Activated CD8-positive, alpha-beta T cell treated with anti-CD3 and anti-CD28 coated beads for 36 hours (primary cell): ENCODE measurements at regions of chr15 and their contacts with region 1.

Region 1: DNA sequence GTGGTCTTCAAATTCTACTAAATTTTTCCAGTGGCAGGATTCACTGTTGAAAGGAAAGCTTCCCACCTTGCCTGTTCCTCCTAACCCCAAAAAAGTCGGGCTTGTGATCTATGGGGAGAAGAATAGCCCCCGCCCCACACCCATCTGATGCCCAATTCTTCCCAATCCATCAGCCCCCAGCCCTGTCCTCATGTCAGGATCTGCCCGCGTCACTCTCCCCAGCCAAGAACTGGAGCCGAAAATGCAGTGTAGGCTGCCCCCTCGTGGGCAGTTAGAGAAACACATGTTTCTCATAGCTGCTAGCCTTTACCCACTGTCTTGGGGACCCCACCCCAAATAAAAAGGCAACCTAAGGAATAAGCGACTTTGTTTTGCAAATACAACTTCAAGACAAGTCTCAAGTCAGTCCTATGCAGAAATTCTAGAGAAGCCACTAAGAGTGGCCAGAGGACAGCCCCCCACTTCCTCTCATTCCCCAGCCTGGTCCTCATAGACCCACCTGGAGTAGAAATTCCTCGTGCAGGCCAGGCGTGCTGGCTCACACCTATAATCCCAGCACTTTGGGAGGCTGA is 13.0 kb upstream of the CSK start:
- DNase-seq: peak; percentile 74
- ATAC-seq: peak; percentile 59
- H3K4me3 Mint-ChIP-seq: peak overlapping the region; percentile 19
- H3K27ac Mint-ChIP-seq: peak overlapping the region; percentile 44
- H3K4me1 Mint-ChIP-seq: peaks cover 24% of the 10 kb centered on the region
- H3K27me3 Mint-ChIP-seq: peaks cover 2% of the 10 kb centered on the region
- CTCF ChIP-seq: peak; percentile 85

Region 2: GRCh38 chr15:74411691-74412558 is 356.9 kb before region 1 on chr15:
- CTCF ChIA-PET with region 1: no interaction called
- POLR2A ChIA-PET with region 1: no interaction called
- intact Hi-C with region 1: no loop called
- DNase-seq: no peak
- ATAC-seq: no peak
- H3K4me3 Mint-ChIP-seq: no peak overlapping the region
- H3K27ac Mint-ChIP-seq: no peak overlapping the region
- H3K4me1 Mint-ChIP-seq: peaks cover 24% of the 10 kb centered on the region
- H3K27me3 Mint-ChIP-seq: no peaks in the 10 kb centered on the region
- CTCF ChIP-seq: no peak

Region 3: GRCh38 chr15:74525946-74526345 is 242.9 kb before region 1 on chr15:
- CTCF ChIA-PET with region 1: no interaction called
- POLR2A ChIA-PET with region 1: no interaction called
- intact Hi-C with region 1: no loop called
- DNase-seq: no peak
- ATAC-seq: no peak
- H3K4me3 Mint-ChIP-seq: no peak overlapping the region
- H3K27ac Mint-ChIP-seq: no peak overlapping the region
- H3K4me1 Mint-ChIP-seq: peaks cover 5% of the 10 kb centered on the region
- H3K27me3 Mint-ChIP-seq: no peaks in the 10 kb centered on the region
- CTCF ChIP-seq: no peak

Region 4: GRCh38 chr15:74620636-74621545 is 148.0 kb before region 1 on chr15:
- CTCF ChIA-PET with region 1: interaction called, 79 read pairs
- POLR2A ChIA-PET with region 1: interaction called, 6 read pairs
- intact Hi-C with region 1: no loop called
- DNase-seq: peak; percentile 89
- ATAC-seq: peak; percentile 96
- H3K4me3 Mint-ChIP-seq: no peak overlapping the region
- H3K27ac Mint-ChIP-seq: peak overlapping the region; percentile 77
- H3K4me1 Mint-ChIP-seq: peaks cover 60% of the 10 kb centered on the region
- H3K27me3 Mint-ChIP-seq: no peaks in the 10 kb centered on the region
- CTCF ChIP-seq: peak; percentile 98

Region 5: GRCh38 chr15:74669627-74670026 is 99.2 kb before region 1 on chr15:
- CTCF ChIA-PET with region 1: interaction called, 11 read pairs
- POLR2A ChIA-PET with region 1: no interaction called
- intact Hi-C with region 1: no loop called
- DNase-seq: no peak
- ATAC-seq: no peak
- H3K4me3 Mint-ChIP-seq: no peak overlapping the region
- H3K27ac Mint-ChIP-seq: no peak overlapping the region
- H3K4me1 Mint-ChIP-seq: peaks cover 6% of the 10 kb centered on the region
- H3K27me3 Mint-ChIP-seq: no peaks in the 10 kb centered on the region
- CTCF ChIP-seq: no peak

Region 6: DNA sequence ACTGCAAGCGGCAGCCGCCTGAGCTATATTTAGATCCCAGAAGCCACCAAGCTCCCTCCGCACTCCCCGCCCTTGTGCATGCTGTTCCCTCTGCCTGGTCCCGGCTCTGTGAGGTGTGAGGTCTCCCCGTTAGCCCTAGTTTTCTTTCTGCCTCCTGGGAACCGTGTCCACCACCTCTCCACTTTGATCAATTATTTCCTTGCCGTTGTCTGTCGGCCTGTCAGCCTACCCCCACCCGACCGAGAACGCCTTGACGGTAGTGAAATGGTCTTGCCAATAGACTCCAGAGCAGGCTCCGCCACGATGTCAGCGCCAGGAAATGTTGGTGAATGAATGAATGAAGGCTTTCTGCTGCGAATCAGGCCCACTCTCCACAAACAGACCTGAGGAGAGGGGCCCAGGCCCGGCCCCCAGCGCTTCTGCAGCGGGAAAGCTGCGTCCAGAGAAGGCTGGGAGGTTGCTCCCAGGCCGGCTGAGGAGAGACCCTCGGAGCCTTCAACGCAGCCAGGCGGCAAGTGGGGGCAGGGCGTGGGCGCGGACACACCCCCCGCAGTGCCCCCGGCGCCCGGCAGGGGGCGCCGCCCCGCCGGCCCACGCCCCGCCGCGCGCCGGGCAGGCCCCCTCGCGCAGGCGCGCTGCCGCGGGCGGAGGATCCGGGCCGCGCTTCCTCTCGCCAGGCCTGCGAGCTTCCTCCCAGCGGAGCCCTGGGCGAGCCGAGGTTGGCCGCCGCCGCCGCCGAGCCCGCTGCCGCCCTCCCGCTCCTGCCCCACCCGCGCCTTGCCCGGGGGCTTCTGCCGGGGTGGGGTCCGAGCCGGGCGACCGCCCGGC is 12.8 kb after region 1 on chr15 and contains the start of gene CSK:
- CTCF ChIA-PET with region 1: interaction called, 1,327 read pairs
- POLR2A ChIA-PET with region 1: interaction called, 410 read pairs
- intact Hi-C with region 1: no loop called
- DNase-seq: peak; percentile 76
- ATAC-seq: peak; percentile 40
- H3K4me3 Mint-ChIP-seq: peak within 1 kb of the TSS; percentile 98
- H3K27ac Mint-ChIP-seq: peak within 1 kb of the TSS; percentile 98
- H3K4me1 Mint-ChIP-seq: peaks cover 46% of the 10 kb centered on the region
- H3K27me3 Mint-ChIP-seq: no peaks in the 10 kb centered on the region
- CTCF ChIP-seq: peak; percentile 66
- total RNA-seq, gene CSK: 254 to 260 TPM

Region 7: DNA sequence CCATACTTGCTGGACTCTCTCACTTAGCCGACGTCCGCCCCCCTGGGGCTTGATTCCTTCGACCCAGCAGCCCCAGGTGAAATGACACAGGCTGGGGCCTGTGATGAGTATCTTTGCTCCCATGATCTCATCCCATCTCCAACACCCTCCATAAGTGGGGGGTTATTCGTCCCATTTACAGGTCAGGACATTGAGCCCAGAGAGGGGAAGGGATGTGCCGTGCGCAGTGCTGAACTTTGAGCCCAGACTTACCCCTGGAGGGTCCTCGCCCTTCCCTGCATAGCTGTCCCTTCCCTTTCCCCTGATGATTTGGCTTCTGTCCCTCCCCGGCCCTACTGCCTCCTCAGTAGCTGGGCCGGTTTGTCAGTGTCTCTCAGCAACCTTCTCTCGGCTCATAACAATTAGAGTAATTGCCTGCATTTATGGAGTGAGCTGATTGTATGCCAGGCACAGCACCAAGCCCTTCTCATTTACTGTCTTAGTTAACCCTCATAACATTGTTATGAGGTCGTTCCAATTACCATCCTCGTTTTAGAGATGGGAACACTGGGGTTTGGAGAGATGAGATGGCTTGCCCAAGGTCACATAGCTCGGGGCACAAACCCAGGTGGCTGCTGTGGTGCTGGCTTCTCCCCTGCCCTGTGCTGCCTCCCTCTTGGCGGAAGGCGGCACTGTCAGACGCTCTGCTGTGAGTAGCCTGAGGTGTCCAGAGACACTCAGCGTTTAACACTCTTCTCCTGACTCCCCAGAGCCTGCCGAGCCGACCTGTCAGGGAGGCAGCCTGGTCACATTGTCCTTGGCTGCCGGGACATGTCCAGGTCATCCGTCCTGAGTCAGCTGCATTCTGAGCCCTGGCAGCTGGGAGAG is 48.2 kb after region 1 on chr15:
- CTCF ChIA-PET with region 1: interaction called, 18 read pairs
- POLR2A ChIA-PET with region 1: no interaction called
- intact Hi-C with region 1: no loop called
- DNase-seq: no peak
- ATAC-seq: no peak
- H3K4me3 Mint-ChIP-seq: no peak overlapping the region
- H3K27ac Mint-ChIP-seq: no peak overlapping the region
- H3K4me1 Mint-ChIP-seq: peaks cover 8% of the 10 kb centered on the region
- H3K27me3 Mint-ChIP-seq: no peaks in the 10 kb centered on the region
- CTCF ChIP-seq: no peak

Region 8: DNA sequence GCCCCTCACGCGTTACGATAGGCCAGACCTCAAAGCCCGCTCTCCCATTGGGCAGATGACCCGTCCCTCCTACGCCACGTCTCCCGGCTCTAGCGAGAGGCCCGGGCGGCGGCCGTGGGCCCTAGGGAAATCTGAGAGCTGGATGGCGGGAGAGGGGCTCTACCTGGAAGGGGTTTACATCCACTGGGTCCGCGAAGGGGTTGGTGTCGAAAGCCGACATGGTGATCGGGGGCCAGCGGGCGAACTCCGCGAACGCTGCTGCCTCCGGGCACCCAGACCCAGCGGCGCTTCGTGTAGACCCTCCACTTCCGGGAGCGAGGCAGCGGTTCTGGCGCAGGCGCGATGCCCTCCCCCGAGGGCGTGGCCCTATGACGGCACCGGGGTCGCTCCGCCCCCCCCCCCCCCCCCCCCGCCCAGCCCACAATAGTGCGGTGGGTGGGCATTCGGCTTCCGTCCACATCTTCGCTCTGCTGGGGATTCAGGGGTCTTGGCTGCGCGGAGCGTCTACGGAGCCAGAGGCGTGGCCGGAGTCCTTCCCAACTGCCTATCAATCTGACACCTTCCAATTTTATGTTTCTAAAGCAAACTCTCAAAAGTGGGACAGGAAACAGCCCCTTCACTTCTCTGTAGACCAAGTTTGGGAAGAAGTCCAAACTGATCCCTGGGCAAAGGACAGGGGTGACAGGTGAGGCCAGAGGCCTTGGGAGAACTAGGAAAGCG is 104.3 kb after region 1 on chr15 and contains the start of gene SCAMP2:
- CTCF ChIA-PET with region 1: interaction called, 14 read pairs
- POLR2A ChIA-PET with region 1: no interaction called
- intact Hi-C with region 1: no loop called
- DNase-seq: peak; percentile 96
- ATAC-seq: peak; percentile 93
- H3K4me3 Mint-ChIP-seq: peak within 1 kb of the TSS; percentile 95
- H3K27ac Mint-ChIP-seq: peak within 1 kb of the TSS; percentile 92
- H3K4me1 Mint-ChIP-seq: peaks cover 36% of the 10 kb centered on the region
- H3K27me3 Mint-ChIP-seq: no peaks in the 10 kb centered on the region
- CTCF ChIP-seq: no peak
- total RNA-seq, gene SCAMP2: 57.8 to 58.9 TPM

Region 9: DNA sequence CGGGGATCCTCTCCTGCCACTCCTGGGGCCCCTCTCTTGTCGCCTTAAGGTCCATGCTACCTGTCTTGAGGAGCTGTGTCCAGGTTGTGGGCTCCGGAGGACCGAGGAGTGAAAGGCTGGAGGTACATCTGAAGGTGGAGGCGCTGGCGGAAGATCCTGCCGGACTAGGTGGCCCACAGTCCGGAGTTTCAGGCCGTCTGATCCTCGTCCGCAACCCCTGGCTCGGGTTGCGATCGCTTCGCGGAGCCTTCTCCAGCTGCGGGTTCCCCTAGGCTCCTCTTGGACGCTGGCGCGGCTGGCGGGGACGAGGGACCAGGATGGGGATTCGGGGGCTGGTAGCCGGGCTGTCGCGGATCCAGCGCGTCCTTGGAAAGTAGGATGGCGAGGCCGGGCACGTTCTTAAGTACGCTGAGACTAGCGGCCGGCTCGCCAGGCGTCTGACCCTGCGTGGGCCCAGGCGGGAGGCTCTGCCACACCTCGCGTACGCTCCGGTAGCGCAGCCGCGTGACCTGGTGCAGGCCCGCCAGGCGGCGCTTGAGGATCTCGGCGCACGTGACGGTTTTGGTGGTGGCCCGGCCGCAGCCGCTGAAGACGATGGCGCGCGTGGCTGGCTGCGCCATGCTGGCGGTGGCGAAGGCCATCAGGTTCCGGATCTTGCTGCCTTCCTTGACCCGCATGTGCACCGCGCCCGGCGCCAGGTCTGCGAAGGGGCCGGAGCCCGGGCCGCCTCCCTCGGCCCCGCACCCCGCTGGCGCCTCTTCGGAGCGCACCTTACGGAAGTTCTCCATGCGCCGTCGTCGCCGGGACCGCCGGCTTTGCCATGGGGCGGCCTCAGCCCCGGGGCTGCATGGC is 187.2 kb after region 1 on chr15:
- CTCF ChIA-PET with region 1: interaction called, 25 read pairs
- POLR2A ChIA-PET with region 1: no interaction called
- intact Hi-C with region 1: no loop called
- DNase-seq: peak; percentile 74
- ATAC-seq: peak; percentile 37
- H3K4me3 Mint-ChIP-seq: peak overlapping the region; percentile 69
- H3K27ac Mint-ChIP-seq: no peak overlapping the region
- H3K4me1 Mint-ChIP-seq: peaks cover 47% of the 10 kb centered on the region
- H3K27me3 Mint-ChIP-seq: peaks cover 29% of the 10 kb centered on the region
- CTCF ChIP-seq: peak; percentile 51